K562 (cell line): ENCODE measurements at regions of chr10 and their contacts with region 1.

Region 1: GRCh38 chr10:84296091-84296981 is 32.1 kb upstream of the CCSER2 start:
- DNase-seq: no peak
- ATAC-seq: no peak
- H3K4me3 ChIP-seq: no peak overlapping the region
- H3K27ac ChIP-seq: no peak overlapping the region
- H3K4me1 ChIP-seq: peaks cover 7 to 19% of the 10 kb centered on the region in 2 experiments; a peak in 4 of 5 replicates
- H3K27me3 ChIP-seq: peaks cover 8 to 17% of the 10 kb centered on the region in 2 experiments; a peak in 4 of 5 replicates
- CTCF ChIP-seq: no peak
- EP300 ChIP-seq: no peak
- POLR2A ChIP-seq: no peak
- RAD21 ChIP-seq: no peak

Region 2: GRCh38 chr10:83657487-83657886 is 638.8 kb before region 1 on chr10:
- CTCF ChIA-PET with region 1: no interaction called
- POLR2A ChIA-PET with region 1: no interaction called
- in situ Hi-C with region 1: no loop called
- intact Hi-C with region 1: no loop called
- DNase-seq: no peak
- ATAC-seq: no peak
- H3K4me3 ChIP-seq: no peak overlapping the region
- H3K27ac ChIP-seq: no peak overlapping the region
- H3K4me1 ChIP-seq: no peaks in the 10 kb centered on the region
- H3K27me3 ChIP-seq: no peaks in the 10 kb centered on the region
- CTCF ChIP-seq: no peak
- EP300 ChIP-seq: no peak
- POLR2A ChIP-seq: no peak
- RAD21 ChIP-seq: no peak

Region 3: DNA sequence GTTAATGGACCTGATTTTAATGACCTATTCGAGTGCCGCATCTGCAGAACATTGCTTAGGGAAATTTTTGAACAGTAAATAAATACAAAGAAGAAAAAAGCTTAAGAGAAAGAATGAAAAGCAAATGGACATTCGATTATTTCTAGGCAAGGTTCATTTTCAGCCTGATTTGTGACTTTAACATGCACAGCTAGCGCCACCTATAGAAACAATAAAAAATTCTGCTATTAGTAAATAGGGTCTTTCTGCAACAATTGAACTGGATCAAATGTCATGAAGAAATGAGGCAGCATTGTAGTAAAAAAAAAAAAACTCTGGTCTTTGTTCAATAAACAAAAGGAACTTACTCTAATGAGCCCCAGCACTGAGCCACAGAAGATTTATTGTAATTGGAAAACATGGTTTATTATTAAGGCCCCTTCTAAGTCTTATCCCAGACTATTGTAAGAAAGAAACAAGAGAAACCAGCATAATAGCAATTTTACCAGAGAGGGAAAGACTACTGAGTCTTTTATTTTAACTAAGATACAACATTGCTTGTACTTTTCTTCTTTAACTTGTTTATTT is 198.5 kb before region 1 on chr10:
- CTCF ChIA-PET with region 1: no interaction called
- POLR2A ChIA-PET with region 1: no interaction called
- in situ Hi-C with region 1: no loop called
- intact Hi-C with region 1: no loop called
- DNase-seq: peak in 1 of 4 experiments; percentile 23
- ATAC-seq: peak; percentile 50; the same call in 1 of the 3 replicates
- H3K4me3 ChIP-seq: no peak overlapping the region
- H3K27ac ChIP-seq: no peak overlapping the region
- H3K4me1 ChIP-seq: no peaks in the 10 kb centered on the region
- H3K27me3 ChIP-seq: peaks cover 0 to 5% of the 10 kb centered on the region in 2 experiments; a peak in 1 of 5 replicates
- CTCF ChIP-seq: peak; percentile 35 to 74 (median 54); a peak in 5 of 6 replicates
- EP300 ChIP-seq: no peak
- POLR2A ChIP-seq: no peak
- RAD21 ChIP-seq: peak; percentile 46 to 69

Region 4: GRCh38 chr10:84308481-84309304 is 12.4 kb after region 1 on chr10:
- CTCF ChIA-PET with region 1: no interaction called
- POLR2A ChIA-PET with region 1: interaction called, 12 read pairs
- in situ Hi-C with region 1: no loop called
- intact Hi-C with region 1: no loop called
- DNase-seq: peak in 1 of 4 experiments; percentile 29
- ATAC-seq: no peak
- H3K4me3 ChIP-seq: no peak overlapping the region
- H3K27ac ChIP-seq: no peak overlapping the region
- H3K4me1 ChIP-seq: peaks cover 5 to 22% of the 10 kb centered on the region in 2 experiments
- H3K27me3 ChIP-seq: no peaks in the 10 kb centered on the region
- CTCF ChIP-seq: no peak
- EP300 ChIP-seq: no peak
- POLR2A ChIP-seq: no peak
- RAD21 ChIP-seq: no peak

Region 5: DNA sequence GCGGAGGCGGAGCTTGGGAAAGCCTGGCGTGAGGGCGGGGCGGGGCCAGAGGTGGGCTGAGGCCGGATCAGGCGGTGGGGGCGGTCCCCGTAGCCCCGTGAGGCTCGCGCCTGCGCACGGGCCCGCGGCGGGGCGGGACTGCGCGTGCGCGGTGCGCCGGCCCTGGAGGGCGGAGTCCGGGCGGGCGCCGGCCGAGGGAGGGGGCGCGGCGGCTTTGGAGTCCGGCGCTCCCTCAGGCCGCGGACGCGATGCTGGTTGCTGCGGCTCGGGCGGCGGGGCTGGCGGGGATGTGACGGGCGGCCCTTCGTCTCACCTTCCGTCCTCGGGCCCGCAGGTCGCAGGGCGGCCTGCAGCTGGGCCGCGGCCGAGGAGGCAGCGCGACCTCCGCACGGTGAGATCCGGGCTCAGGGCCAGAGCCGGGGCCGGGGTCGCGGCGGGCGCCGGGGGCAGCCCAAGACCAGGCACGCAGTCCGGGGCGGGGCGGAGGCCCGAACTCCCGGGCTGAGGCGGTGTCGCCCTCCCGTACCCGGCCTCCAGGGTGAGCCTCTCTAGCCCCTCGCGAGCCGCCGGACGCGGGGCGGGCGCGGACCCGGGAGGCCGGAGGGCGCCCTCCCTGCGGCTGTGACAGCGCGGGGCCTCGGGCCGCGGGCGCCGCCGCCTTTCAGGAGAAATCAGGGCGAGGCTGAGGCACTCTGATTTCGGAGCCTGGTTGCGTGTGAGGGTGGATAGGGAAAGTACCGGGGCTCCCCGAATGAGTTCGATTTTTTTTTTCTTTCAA is 32.3 kb after region 1 on chr10 and contains the start of gene CCSER2:
- CTCF ChIA-PET with region 1: no interaction called
- POLR2A ChIA-PET with region 1: interaction called, 5 read pairs
- in situ Hi-C with region 1: no loop called
- intact Hi-C with region 1: loop called (anchors 1 kb)
- DNase-seq: peak; percentile 72 to 100 (median 100)
- ATAC-seq: peak; percentile 85
- H3K4me3 ChIP-seq: peak within 1 kb of the TSS; percentile 89
- H3K27ac ChIP-seq: peak within 1 kb of the TSS; percentile 88
- H3K4me1 ChIP-seq: peaks cover 17 to 33% of the 10 kb centered on the region in 2 experiments
- H3K27me3 ChIP-seq: no peaks in the 10 kb centered on the region
- CTCF ChIP-seq: peak in 2 of 3 experiments; percentile 26 to 42; a peak in 3 of 6 replicates
- EP300 ChIP-seq: no peak
- POLR2A ChIP-seq: no peak
- RAD21 ChIP-seq: no peak
- polyA plus RNA-seq, gene CCSER2: 2.7 to 2.9 TPM

Region 6: GRCh38 chr10:84352251-84352842 is 56.0 kb after region 1 on chr10:
- CTCF ChIA-PET with region 1: no interaction called
- POLR2A ChIA-PET with region 1: no interaction called
- in situ Hi-C with region 1: no loop called
- intact Hi-C with region 1: no loop called
- DNase-seq: peak; percentile 67 to 86 (median 74)
- ATAC-seq: peak; percentile 99
- H3K4me3 ChIP-seq: no peak overlapping the region
- H3K27ac ChIP-seq: no peak overlapping the region
- H3K4me1 ChIP-seq: no peaks in the 10 kb centered on the region; a peak in 1 of 5 replicates
- H3K27me3 ChIP-seq: no peaks in the 10 kb centered on the region
- CTCF ChIP-seq: peak; percentile 86 to 90 (median 87)
- EP300 ChIP-seq: no peak
- POLR2A ChIP-seq: no peak
- RAD21 ChIP-seq: peak; percentile 52 to 75